ENCODE measurements at regions of chr6 and their contacts with region 1.

Region 1: DNA sequence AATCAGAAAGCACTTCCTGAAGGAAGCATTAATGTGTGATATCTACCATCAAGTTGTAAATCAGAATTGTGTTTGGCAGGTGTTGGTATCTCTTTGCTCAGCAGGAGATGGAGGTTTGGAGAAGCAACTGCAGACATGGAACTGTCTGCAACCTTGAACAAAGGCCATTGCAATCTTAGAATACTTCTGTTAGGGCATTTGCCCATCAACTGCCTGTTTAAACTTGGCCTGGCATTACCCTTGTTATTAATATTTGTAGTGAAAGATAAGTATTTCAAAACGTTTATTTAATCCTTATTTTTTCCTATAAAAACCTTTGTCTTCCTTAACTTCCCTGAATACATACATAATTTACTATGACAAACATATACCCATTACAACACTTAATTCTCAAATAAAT is 14.1 kb downstream of the GSTA5 start:
- DNase-seq: no peak
- H3K4me3 ChIP-seq: no peak overlapping the region
- H3K27ac ChIP-seq: no peak overlapping the region
- H3K4me1 ChIP-seq: no peaks in the 10 kb centered on the region
- H3K27me3 ChIP-seq: no peaks in the 10 kb centered on the region
- CTCF ChIP-seq: no peak
- EP300 ChIP-seq: no peak
- POLR2A ChIP-seq: no peak

Region 2: GRCh38 chr6:52787917-52788316 is 38.6 kb before region 1 on chr6:
- intact Hi-C with region 1: loop called (anchors 2 kb)
- DNase-seq: no peak
- H3K4me3 ChIP-seq: no peak overlapping the region
- H3K27ac ChIP-seq: no peak overlapping the region
- H3K4me1 ChIP-seq: no peaks in the 10 kb centered on the region
- H3K27me3 ChIP-seq: no peaks in the 10 kb centered on the region
- CTCF ChIP-seq: no peak
- EP300 ChIP-seq: no peak
- POLR2A ChIP-seq: no peak

Region 3: DNA sequence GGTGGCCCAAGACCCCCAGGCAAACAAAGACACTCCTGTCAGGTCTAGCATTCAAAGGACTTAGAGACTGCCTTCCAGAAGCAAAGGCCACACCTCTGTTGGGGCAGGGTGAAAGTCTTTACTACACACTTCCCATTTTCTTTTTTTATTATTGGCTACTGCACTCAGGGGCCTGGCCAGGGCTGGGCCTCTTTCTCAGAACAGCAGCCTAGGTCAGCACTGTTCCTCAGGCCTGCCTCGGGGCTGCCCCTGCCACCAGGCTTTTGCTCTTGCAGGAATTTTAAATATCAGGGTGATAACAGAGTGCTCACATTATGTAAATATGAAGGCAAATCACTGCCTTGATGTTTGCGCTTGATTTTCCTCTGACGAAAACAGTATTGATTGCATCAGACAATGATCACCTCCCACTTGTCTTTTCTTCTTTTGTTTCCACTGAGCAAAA is 150.1 kb after region 1 on chr6:
- intact Hi-C with region 1: no loop called
- DNase-seq: no peak
- H3K4me3 ChIP-seq: no peak overlapping the region
- H3K27ac ChIP-seq: no peak overlapping the region
- H3K4me1 ChIP-seq: no peaks in the 10 kb centered on the region
- H3K27me3 ChIP-seq: no peaks in the 10 kb centered on the region
- CTCF ChIP-seq: no peak
- EP300 ChIP-seq: no peak
- POLR2A ChIP-seq: no peak

Region 4: DNA sequence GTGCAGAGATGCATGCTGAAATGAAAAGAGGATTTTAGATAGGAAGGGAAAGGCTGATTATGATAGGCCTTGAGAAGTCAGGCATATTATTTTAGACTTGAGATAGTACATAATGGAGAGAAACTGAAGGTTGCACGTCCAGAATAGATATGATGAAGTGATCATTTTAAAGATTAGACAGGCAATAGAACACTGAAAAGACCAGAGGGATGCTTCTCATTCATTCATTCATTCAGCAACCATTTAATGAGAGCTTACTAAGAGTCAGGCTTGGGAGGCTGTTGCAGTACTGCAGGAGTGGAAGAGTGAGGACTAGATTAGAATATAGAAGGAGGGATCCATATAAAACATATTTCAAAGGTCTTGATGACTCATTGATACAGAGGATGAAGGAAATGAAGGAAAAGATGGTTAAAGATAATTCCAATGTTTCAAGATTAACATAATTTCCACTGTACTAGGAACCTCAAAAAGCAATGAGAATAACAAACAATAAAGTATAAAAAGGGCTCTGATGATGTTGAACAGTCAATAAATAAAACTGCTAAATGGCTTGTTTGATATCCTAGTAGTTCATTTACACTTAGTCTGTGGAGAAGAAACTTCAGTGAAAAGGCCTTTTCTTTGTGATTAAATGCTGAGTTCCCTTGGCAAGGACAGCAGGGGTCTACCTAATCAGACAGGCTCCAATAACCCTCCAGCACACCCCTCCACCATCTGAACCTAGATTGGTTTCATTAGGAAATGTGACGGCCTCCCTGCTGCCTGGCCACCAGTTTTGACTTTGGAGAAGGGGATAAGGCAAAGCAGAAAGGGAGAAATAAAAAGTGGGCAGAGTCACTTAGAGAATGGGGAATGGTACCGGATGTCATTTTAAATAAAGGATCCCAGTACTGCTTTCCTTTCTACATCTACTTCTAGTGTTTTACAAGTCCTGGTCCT is 233.4 kb after region 1 on chr6:
- intact Hi-C with region 1: no loop called
- DNase-seq: no peak
- H3K4me3 ChIP-seq: peak overlapping the region; percentile 70 to 92 (median 88)
- H3K27ac ChIP-seq: peak overlapping the region; percentile 53 to 96 (median 94)
- H3K4me1 ChIP-seq: peaks cover 0 to 62% (median 56%) of the 10 kb centered on the region in 4 donors
- H3K27me3 ChIP-seq: no peaks in the 10 kb centered on the region
- CTCF ChIP-seq: no peak
- EP300 ChIP-seq: no peak
- POLR2A ChIP-seq: no peak